Thyroid gland (tissue), 4 donors: ENCODE measurements at regions of chr5 and their contacts with region 1.

Region 1: GRCh38 chr5:168219515-168220410 is 71.7 kb upstream of the WWC1 start:
- DNase-seq: peak; percentile 52 to 61
- H3K4me3 ChIP-seq: no peak overlapping the region
- H3K27ac ChIP-seq: no peak overlapping the region
- H3K4me1 ChIP-seq: peaks cover 26 to 36% of the 10 kb centered on the region in 2 donors
- H3K27me3 ChIP-seq: no peaks in the 10 kb centered on the region
- CTCF ChIP-seq: peak; percentile 78 to 98 (median 89)
- POLR2A ChIP-seq: no peak

Region 2: DNA sequence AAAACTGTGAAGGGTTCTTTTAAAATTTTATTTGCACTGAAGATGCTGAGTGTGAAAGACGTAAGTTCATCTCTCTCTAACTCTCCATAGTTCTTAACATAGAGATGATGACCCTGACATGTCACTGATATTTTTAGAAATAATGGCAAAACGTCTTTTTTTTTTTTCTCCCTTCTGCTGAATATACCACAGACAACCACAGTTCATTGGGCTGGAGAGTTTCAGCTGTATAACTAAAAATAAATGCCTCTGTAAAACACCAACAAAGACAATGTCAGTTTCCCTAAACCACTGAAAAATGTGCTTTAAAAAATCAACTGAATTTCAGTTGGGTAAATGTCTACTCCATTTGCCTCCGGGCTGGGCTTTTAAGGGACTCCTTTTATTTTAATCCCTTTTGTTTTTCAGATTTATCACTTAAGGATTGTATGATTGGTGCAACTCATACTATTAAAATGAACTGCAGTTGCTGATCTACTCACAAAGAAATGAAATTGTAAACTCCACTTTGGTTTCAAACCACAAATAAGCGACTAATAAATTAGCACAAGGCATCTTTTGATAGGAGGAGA is 759.2 kb before region 1 on chr5:
- intact Hi-C with region 1: no loop called
- DNase-seq: no peak
- H3K4me3 ChIP-seq: no peak overlapping the region
- H3K27ac ChIP-seq: no peak overlapping the region
- H3K4me1 ChIP-seq: no peaks in the 10 kb centered on the region
- H3K27me3 ChIP-seq: no peaks in the 10 kb centered on the region
- CTCF ChIP-seq: no peak
- POLR2A ChIP-seq: no peak

Region 3: GRCh38 chr5:167723254-167723871 is 496.4 kb before region 1 on chr5:
- intact Hi-C with region 1: loop called (anchors 10 kb)
- DNase-seq: peak; percentile 84 to 89
- H3K4me3 ChIP-seq: no peak overlapping the region
- H3K27ac ChIP-seq: peak overlapping the region in 1 of 3 donors; percentile 55
- H3K4me1 ChIP-seq: peaks cover 0 to 8% of the 10 kb centered on the region in 2 donors
- H3K27me3 ChIP-seq: no peaks in the 10 kb centered on the region
- CTCF ChIP-seq: peak; percentile 69 to 98 (median 84)
- POLR2A ChIP-seq: no peak

Region 4: DNA sequence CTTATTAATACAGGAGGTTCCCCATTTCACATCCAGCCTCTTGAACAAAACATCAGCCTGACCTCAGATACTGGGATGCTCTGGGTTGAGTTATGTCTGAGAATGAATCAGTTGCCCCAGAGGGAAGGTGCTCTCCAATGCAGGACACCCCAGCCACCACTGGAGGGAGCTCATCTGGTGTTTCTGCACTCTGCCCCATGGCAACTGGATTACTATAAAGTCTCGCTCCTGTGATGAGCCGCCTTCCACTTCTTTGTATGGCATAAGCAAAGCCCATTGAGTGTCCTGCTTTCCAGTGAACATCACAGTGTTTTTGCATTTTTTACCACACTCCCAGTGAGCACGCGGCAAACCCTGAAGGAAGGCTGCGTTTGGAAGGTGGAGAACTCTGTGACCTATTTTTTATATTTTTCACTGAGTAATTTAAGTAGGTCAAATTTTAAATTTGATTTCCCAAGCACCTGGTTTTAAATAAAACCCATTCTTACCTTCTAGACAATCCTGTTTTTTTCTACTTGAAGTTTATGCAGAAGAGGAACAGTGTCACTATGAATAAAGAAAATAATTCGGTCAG is 105.2 kb before region 1 on chr5:
- intact Hi-C with region 1: loop called (anchors 10 kb)
- DNase-seq: peak; percentile 25 to 56
- H3K4me3 ChIP-seq: no peak overlapping the region
- H3K27ac ChIP-seq: no peak overlapping the region
- H3K4me1 ChIP-seq: no peaks in the 10 kb centered on the region
- H3K27me3 ChIP-seq: no peaks in the 10 kb centered on the region
- CTCF ChIP-seq: peak in 4 of 6 experiments; percentile 26 to 55 (median 48)
- POLR2A ChIP-seq: no peak